Left ventricle myocardium inferior (tissue), 1 donor: ENCODE measurements at regions of chr20 and their contacts with region 1.

Region 1: DNA sequence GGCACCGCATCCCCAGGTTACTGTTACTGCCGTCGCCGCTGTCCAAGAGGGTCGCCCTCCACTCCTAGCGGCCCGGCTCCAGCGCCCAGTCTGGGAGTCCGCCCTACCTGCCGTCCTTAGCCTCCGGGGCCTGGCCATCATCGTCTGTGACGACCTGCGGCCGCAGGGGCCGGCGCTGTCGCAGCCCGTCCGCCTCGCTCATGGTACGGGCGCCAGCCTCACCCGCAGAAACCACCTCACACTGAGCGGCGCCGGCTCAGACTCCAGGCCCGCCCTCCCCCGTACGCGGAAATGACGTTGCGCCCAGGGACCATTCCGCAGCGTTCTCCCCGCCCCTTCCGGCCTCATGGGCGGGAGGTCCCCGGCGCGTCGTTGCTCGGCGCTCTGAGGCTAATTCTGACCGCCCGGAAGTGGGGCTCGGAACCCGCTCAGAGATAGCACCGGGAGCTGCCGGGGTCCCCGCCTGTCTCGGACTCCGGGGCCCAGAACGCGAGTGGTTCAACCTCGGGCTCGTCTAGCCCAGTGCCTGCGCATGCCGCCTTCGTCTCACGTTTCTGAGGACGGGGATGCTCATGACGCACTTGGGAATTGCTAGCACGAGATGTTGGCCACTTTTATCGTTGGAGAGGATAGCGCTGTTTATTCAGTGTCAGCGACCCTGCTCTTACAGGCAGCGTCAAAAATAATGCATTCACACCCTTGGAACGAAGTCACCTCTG is at the start of gene APMAP:
- DNase-seq: peak; percentile 97
- H3K4me3 ChIP-seq: peak within 1 kb of the TSS; percentile 93
- H3K27ac ChIP-seq: peak within 1 kb of the TSS; percentile 96
- H3K4me1 ChIP-seq: peaks cover 68% of the 10 kb centered on the region
- H3K27me3 ChIP-seq: no peaks in the 10 kb centered on the region
- CTCF ChIP-seq: no peak
- total RNA-seq, gene APMAP: 23.8 TPM

Region 2: DNA sequence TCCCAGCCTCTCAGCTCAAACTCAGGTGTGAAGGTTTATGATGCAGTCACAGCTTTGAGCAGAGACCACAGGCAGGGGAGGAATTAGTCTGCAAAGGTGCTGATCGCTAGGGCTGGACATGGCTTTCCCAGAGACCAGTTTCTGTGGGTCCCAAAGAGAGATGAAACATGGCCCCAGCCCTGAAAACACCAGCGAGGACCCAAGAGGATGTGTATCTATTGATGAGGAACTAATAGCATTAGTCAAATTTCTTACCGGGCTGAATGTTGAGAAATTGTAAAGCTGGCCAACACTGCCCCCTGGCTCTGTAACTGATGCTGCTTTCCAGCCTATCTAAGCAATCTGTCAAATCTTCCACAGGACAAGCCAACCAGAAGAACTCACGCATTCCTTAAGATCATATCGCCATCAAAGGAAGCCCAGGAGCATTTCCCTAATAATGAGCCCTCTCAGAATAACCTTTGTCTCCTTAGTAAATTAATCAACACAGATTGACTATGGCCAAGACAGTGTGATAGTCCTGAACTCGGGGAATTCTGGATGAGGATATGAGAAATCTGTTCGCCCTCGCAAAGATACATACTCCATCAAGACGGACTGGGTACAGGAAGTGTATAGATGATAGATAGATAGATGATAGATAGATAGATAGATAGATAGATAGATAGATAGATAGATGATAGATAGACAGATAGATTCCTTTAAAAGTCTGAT is 73.1 kb after region 1 on chr20:
- intact Hi-C with region 1: loop called (anchors 2 kb)
- DNase-seq: peak; percentile 64
- H3K4me3 ChIP-seq: no peak overlapping the region
- H3K27ac ChIP-seq: no peak overlapping the region
- H3K4me1 ChIP-seq: peaks cover 20% of the 10 kb centered on the region
- H3K27me3 ChIP-seq: peaks cover 34% of the 10 kb centered on the region
- CTCF ChIP-seq: peak; percentile 89

Region 3: GRCh38 chr20:25178563-25179438 is 186.2 kb after region 1 on chr20:
- intact Hi-C with region 1: loop called (anchors 10 kb)
- DNase-seq: no peak
- H3K4me3 ChIP-seq: no peak overlapping the region
- H3K27ac ChIP-seq: no peak overlapping the region
- H3K4me1 ChIP-seq: peaks cover 6% of the 10 kb centered on the region
- H3K27me3 ChIP-seq: no peaks in the 10 kb centered on the region
- CTCF ChIP-seq: peak; percentile 80